ENCODE measurements at regions of chr11 and their contacts with region 1.

Region 1: GRCh38 chr11:117107701-117108590 is 9.7 kb upstream of the SIK3 start:
- DNase-seq: no peak
- H3K4me3 ChIP-seq: no peak overlapping the region
- H3K27ac ChIP-seq: no peak overlapping the region
- H3K4me1 ChIP-seq: no peaks in the 10 kb centered on the region
- H3K27me3 ChIP-seq: no peaks in the 10 kb centered on the region
- CTCF ChIP-seq: no peak
- POLR2A ChIP-seq: no peak

Region 2: DNA sequence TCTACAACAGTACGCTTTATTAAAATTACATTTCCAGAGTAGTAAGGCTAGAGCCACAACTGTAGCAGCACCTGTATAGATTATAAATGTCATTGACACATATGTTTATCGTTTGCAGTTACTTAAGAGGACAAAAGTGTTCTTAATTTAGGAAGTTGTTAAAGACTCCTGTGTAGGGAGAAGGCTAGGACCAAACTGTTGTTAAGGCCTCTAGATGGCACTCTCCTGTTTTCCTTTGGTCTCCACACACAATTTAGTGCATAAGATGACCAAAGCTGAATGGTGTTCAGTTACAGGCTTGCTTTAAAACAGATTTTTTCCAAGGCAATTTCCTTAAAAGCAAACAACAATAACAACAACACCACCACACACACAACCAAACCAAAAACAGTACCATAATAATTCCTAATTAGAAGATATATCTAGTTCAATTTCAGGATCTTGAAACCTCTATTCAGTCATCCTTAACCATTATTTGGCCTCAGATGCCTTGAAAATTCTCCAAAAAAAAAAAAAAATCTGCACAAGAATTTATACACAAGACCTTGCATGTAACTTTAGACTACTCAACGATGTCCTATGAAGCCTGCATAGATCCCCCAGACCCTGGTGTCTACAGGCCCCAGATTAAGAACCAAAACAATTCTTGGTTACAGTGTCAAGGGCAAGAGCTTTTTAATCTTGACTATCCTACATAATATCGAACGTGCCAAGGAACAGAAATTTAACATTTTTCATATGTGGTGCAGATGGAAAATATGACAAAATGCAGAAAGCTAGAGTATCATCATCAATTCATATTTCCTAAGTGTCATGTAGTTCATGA is 227.9 kb before region 1 on chr11:
- intact Hi-C with region 1: loop called (anchors 2 to 5 kb)
- DNase-seq: peak in 2 of 7 donors; percentile 33 to 47
- H3K4me3 ChIP-seq: no peak overlapping the region
- H3K27ac ChIP-seq: no peak overlapping the region
- H3K4me1 ChIP-seq: no peaks in the 10 kb centered on the region
- H3K27me3 ChIP-seq: no peaks in the 10 kb centered on the region
- CTCF ChIP-seq: peak; percentile 31 to 74 (median 68)
- POLR2A ChIP-seq: no peak

Measured in adrenal gland (tissue), 19 donors.